Ascending aorta (tissue), 2 donors: ENCODE measurements at regions of chr4 and their contacts with region 1.

Region 1: DNA sequence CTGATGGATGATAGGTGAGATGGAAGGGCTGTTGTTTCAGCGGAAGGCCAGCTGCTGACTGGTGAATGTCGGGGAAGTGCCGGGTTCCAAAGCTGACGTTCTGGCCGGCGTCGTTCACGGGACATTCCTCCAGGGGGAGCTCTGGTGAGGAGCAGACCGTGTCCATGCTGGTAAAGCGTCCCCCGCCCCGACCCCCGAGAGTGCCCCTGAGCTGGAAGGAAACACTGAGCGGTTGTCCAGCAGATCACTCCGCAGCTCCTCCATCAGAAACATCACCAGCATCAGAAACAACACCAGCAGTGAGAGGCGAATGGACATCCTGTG is 18.6 kb upstream of the ADRA2C start:
- DNase-seq: no peak
- H3K4me3 ChIP-seq: no peak overlapping the region
- H3K27ac ChIP-seq: peak overlapping the region; percentile 36 to 51
- H3K4me1 ChIP-seq: peaks cover 7 to 31% of the 10 kb centered on the region in 2 donors
- H3K27me3 ChIP-seq: no peaks in the 10 kb centered on the region
- CTCF ChIP-seq: peak in 2 of 3 experiments; percentile 37 to 50

Region 2: GRCh38 chr4:3677748-3678070 is 69.8 kb before region 1 on chr4:
- intact Hi-C with region 1: no loop called
- DNase-seq: no peak
- H3K4me3 ChIP-seq: no peak overlapping the region
- H3K27ac ChIP-seq: no peak overlapping the region
- H3K4me1 ChIP-seq: no peaks in the 10 kb centered on the region
- H3K27me3 ChIP-seq: no peaks in the 10 kb centered on the region
- CTCF ChIP-seq: no peak

Region 3: GRCh38 chr4:3724319-3725231 is 23.0 kb before region 1 on chr4:
- intact Hi-C with region 1: loop called (anchors 2 kb)
- DNase-seq: no peak
- H3K4me3 ChIP-seq: peak overlapping the region in 1 of 2 donors; percentile 26
- H3K27ac ChIP-seq: peak overlapping the region; percentile 74 to 86
- H3K4me1 ChIP-seq: peaks cover 9 to 49% of the 10 kb centered on the region in 2 donors
- H3K27me3 ChIP-seq: no peaks in the 10 kb centered on the region
- CTCF ChIP-seq: no peak

Region 4: DNA sequence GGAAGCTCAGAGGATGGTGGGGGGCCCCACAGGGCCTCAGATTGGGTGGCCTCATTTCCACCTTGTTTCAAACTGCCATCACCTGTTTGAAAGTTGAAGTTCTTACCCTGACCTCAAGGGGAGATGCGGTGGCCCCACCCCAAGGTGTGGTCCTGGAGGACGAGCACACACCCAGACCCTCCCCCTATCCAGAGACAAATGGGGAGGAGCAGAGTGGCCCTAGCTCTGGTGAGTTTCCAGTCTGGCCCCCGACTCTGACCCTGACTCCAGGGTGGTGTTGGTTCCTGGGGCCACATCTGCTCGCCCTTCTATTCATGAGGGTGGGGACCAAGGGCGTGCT is 17.7 kb before region 1 on chr4:
- intact Hi-C with region 1: loop called (anchors 2 kb)
- DNase-seq: no peak
- H3K4me3 ChIP-seq: no peak overlapping the region
- H3K27ac ChIP-seq: peak overlapping the region; percentile 55 to 87
- H3K4me1 ChIP-seq: peaks cover 0 to 21% of the 10 kb centered on the region in 2 donors
- H3K27me3 ChIP-seq: no peaks in the 10 kb centered on the region
- CTCF ChIP-seq: no peak